Natural killer cell (primary cell): ENCODE measurements at regions of chr14 and their contacts with region 1.

Region 1: GRCh38 chr14:64465191-64465822 is at the start of gene AKAP5:
- DNase-seq: peak; percentile 66 to 82
- ATAC-seq: peak; percentile 86 to 91 (median 88)
- H3K4me3 ChIP-seq: peak within 1 kb of the TSS; percentile 71
- H3K4me3 Mint-ChIP-seq: peak within 1 kb of the TSS; percentile 96
- H3K27ac ChIP-seq: peak within 1 kb of the TSS; percentile 62
- H3K27ac Mint-ChIP-seq: peak within 1 kb of the TSS; percentile 89 to 92
- H3K4me1 ChIP-seq: peaks cover 14% of the 10 kb centered on the region
- H3K4me1 Mint-ChIP-seq: peaks cover 41% of the 10 kb centered on the region in 2 donors
- H3K27me3 ChIP-seq: no peaks in the 10 kb centered on the region
- H3K27me3 Mint-ChIP-seq: no peaks in the 10 kb centered on the region
- CTCF ChIP-seq: no peak
- total RNA-seq, gene AKAP5: 11.1 to 16.3 (median 12.0) TPM

Region 2: DNA sequence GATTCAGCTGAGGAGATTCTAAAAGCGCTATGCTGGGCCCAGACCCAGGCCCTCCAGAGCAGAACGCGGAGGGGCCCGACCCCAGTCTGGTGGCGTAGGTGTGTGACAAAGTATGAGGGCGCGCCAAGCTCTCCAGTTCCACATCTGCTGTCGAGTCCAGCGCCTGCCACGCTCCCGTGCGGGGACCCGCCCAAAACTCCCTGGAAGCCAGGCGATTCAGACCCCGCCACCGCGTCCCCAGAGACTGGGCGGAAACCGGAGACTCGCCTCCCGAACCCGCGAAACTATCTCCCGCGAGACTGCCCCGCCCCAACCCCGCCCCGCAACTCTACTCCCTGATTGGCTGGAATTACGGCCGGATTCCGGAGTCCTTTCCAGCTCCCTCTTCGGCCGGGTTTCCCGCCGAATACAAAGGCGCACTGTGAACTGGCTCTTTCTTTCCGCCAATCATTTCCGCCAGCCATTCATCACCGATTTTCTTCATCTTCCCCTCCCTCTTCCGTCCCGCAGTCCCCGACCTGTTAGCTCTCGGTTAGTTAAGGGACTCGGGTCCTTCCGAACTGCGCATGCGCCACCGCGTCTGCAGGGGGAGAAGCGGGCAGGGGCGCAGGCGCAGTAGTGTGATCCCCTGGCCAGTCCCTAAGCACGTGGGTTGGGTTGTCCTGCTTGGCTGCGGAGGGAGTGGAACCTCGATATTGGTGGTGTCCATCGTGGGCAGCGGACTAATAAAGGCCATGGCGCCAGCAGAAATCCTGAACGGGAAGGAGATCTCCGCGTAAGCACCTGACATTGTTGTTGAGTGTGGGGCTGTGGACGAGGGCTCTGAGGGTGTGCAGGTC is 77.4 kb before region 1 on chr14 and contains the start of gene MTHFD1:
- intact Hi-C with region 1: loop called (anchors 5 kb)
- DNase-seq: peak; percentile 92 to 99
- ATAC-seq: peak; percentile 86 to 90 (median 88)
- H3K4me3 ChIP-seq: peak within 1 kb of the TSS; percentile 87
- H3K4me3 Mint-ChIP-seq: peak within 1 kb of the TSS; percentile 99
- H3K27ac ChIP-seq: peak within 1 kb of the TSS; percentile 63
- H3K27ac Mint-ChIP-seq: peak within 1 kb of the TSS; percentile 90 to 97
- H3K4me1 ChIP-seq: peaks cover 22% of the 10 kb centered on the region
- H3K4me1 Mint-ChIP-seq: peaks cover 20 to 28% of the 10 kb centered on the region in 2 donors
- H3K27me3 ChIP-seq: no peaks in the 10 kb centered on the region
- H3K27me3 Mint-ChIP-seq: no peaks in the 10 kb centered on the region
- CTCF ChIP-seq: no peak
- total RNA-seq, gene MTHFD1: 27.6 to 34.6 (median 28.0) TPM

Region 3: GRCh38 chr14:64421166-64421565 is 44.1 kb before region 1 on chr14:
- intact Hi-C with region 1: loop called (anchors 5 kb)
- DNase-seq: no peak
- ATAC-seq: no peak
- H3K4me3 ChIP-seq: no peak overlapping the region
- H3K4me3 Mint-ChIP-seq: no peak overlapping the region
- H3K27ac ChIP-seq: no peak overlapping the region
- H3K27ac Mint-ChIP-seq: no peak overlapping the region
- H3K4me1 ChIP-seq: no peaks in the 10 kb centered on the region
- H3K4me1 Mint-ChIP-seq: no peaks in the 10 kb centered on the region
- H3K27me3 ChIP-seq: no peaks in the 10 kb centered on the region
- H3K27me3 Mint-ChIP-seq: no peaks in the 10 kb centered on the region
- CTCF ChIP-seq: no peak

Region 4: GRCh38 chr14:64444984-64445845 is 20.1 kb before region 1 on chr14:
- intact Hi-C with region 1: loop called (anchors 1 kb)
- DNase-seq: peak; percentile 55 to 76
- ATAC-seq: peak; percentile 90 to 96 (median 95)
- H3K4me3 ChIP-seq: no peak overlapping the region
- H3K4me3 Mint-ChIP-seq: peak overlapping the region; percentile 58
- H3K27ac ChIP-seq: peak overlapping the region; percentile 93
- H3K27ac Mint-ChIP-seq: peak overlapping the region; percentile 89 to 99
- H3K4me1 ChIP-seq: peaks cover 60% of the 10 kb centered on the region
- H3K4me1 Mint-ChIP-seq: peaks cover 53 to 54% of the 10 kb centered on the region in 2 donors
- H3K27me3 ChIP-seq: no peaks in the 10 kb centered on the region
- H3K27me3 Mint-ChIP-seq: no peaks in the 10 kb centered on the region
- CTCF ChIP-seq: no peak

Region 5: GRCh38 chr14:64491637-64492036 is 26.3 kb after region 1 on chr14:
- intact Hi-C with region 1: no loop called
- DNase-seq: no peak
- ATAC-seq: no peak
- H3K4me3 ChIP-seq: no peak overlapping the region
- H3K4me3 Mint-ChIP-seq: no peak overlapping the region
- H3K27ac ChIP-seq: no peak overlapping the region
- H3K27ac Mint-ChIP-seq: peak overlapping the region in 1 of 2 donors; percentile 35
- H3K4me1 ChIP-seq: no peaks in the 10 kb centered on the region
- H3K4me1 Mint-ChIP-seq: peaks cover 15 to 23% of the 10 kb centered on the region in 2 donors
- H3K27me3 ChIP-seq: no peaks in the 10 kb centered on the region
- H3K27me3 Mint-ChIP-seq: no peaks in the 10 kb centered on the region
- CTCF ChIP-seq: no peak

Region 6: GRCh38 chr14:64914237-64914971 is 449.1 kb after region 1 on chr14 and contains the start of gene CHURC1:
- intact Hi-C with region 1: no loop called
- DNase-seq: peak; percentile 88 to 100
- ATAC-seq: peak; percentile 81 to 90 (median 82)
- H3K4me3 ChIP-seq: peak within 1 kb of the TSS; percentile 65
- H3K4me3 Mint-ChIP-seq: peak within 1 kb of the TSS; percentile 96
- H3K27ac ChIP-seq: peak within 1 kb of the TSS; percentile 95
- H3K27ac Mint-ChIP-seq: peak within 1 kb of the TSS; percentile 97 to 98
- H3K4me1 ChIP-seq: peaks cover 14% of the 10 kb centered on the region
- H3K4me1 Mint-ChIP-seq: peaks cover 41 to 50% of the 10 kb centered on the region in 2 donors
- H3K27me3 ChIP-seq: no peaks in the 10 kb centered on the region
- H3K27me3 Mint-ChIP-seq: peaks cover 0 to 3% of the 10 kb centered on the region in 2 donors
- CTCF ChIP-seq: no peak
- total RNA-seq, gene CHURC1: 56.1 to 65.5 (median 65.4) TPM